Activated naive CD8-positive, alpha-beta T cell treated with anti-CD3 and anti-CD28 coated beads, Interleukin-2, amount 10 ng/mL, durations not matched to agents 7 days and 5 days (primary cell): ENCODE measurements at regions of chr10 and their contacts with region 1.

Region 1: DNA sequence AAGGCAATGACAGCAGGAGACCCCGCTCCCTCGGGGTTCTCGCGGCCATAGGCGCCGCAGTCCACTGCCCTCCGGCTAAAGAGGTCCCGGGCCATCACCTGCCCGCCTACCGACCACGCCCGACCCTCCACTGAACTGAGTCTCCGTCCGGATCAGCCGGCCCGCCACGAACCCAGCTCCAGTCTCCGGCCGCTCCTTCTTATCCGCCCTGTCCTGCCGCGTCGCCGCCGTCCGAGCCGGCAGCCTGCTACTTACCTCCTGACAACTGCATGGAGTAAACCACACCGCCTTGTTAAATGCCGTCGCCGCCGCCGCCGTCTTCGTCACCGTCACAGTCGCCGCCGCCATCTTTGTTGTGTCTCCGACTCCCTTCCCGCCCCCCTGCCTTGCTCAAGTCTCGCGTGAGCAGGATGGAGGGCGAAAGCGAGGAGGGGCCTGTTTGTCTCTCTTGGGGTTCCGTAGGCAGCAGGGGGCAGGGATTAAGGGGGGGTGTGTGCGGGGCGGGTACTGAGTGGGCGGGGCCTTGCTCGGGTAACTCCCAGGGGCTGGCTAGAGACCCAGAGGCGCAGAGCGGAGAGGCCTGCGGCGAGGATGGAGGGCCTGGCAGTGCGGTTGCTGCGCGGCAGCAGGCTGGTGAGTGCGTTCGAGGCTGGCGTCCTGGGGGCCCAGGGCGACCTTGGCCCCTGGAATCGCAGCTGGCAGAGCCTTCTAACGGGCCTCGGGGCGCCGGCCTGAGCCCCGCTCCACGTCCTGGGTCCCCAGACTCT is at the starts of genes ACADSB and IKZF5:
- DNase-seq: peak; percentile 90
- ATAC-seq: peak; percentile 88
- H3K4me3 Mint-ChIP-seq: peak within 1 kb of the TSS; percentile 99
- H3K27ac Mint-ChIP-seq: peak within 1 kb of the TSS; percentile 99
- H3K4me1 Mint-ChIP-seq: peaks cover 30% of the 10 kb centered on the region
- H3K27me3 Mint-ChIP-seq: no peaks in the 10 kb centered on the region
- total RNA-seq, gene ACADSB: 24.2 to 26.2 TPM
- total RNA-seq, gene IKZF5: 18.5 to 20.9 TPM

Region 2: DNA sequence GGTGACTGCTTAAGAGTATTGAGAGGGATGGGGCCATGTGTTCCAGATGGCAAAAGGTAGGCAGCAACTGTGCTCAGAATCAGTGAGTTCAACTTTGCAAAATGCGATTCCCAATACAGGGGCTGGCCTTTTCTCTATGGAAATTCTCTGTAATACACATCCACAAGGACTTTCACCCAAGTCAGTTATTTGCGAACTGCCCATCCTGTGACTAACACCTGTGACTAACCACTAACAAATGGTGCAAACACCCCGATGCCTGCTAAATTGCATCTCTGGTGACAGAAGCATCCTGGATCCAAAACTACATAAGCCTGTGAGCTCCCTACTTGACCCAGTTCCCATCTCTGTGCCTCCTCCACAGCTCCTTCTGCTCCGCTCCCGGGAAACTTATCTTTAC is 154.0 kb before region 1 on chr10:
- POLR2A ChIA-PET with region 1: no interaction called
- DNase-seq: no peak
- ATAC-seq: no peak
- H3K4me3 Mint-ChIP-seq: no peak overlapping the region
- H3K27ac Mint-ChIP-seq: no peak overlapping the region
- H3K4me1 Mint-ChIP-seq: peaks cover 19% of the 10 kb centered on the region
- H3K27me3 Mint-ChIP-seq: no peaks in the 10 kb centered on the region

Region 3: DNA sequence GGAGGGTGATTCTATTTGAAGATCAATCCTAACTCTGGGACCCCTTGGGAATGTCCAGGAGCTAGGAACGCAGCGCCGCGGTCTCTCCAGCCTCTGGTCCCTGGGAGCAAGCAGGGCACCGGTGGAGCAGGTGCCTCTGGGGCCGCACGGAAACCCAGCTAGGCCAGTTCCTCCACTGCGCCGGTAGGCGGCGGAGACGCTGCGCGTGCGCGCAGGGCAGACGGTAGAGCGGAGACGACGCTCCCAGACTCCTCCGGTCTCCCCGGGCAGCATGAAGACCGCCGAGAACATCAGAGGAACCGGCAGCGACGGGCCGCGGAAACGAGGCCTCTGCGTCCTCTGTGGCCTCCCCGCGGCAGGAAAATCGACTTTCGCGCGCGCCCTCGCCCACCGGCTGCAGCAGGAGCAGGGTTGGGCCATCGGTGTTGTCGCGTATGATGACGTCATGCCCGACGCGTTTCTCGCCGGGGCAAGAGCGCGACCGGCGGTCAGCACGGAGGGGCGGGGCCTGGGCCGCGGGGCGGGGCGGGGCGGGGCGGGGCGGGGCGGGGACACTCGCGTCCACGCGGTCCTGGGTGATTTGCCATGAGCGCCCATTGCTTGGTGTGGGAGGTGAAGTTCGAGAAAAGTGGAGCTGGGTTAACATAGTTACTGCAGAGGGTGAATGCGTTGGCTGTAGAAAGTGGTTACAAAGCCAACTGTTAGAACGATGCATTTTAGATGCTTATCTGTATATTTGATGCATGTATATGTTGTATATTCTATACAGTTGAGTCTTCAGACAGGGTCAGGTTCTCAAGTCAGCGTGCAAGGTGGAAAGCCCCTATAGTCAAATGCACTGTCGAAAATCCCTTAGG is 28.2 kb before region 1 on chr10 and contains the start of gene PSTK:
- POLR2A ChIA-PET with region 1: interaction called, 22 read pairs
- DNase-seq: peak; percentile 89
- ATAC-seq: peak; percentile 98
- H3K4me3 Mint-ChIP-seq: peak within 1 kb of the TSS; percentile 90
- H3K27ac Mint-ChIP-seq: peak within 1 kb of the TSS; percentile 94
- H3K4me1 Mint-ChIP-seq: peaks cover 17% of the 10 kb centered on the region
- H3K27me3 Mint-ChIP-seq: peaks cover 15% of the 10 kb centered on the region
- total RNA-seq, gene PSTK: 3.5 to 4.5 TPM